IMR-90 (cell line): ENCODE measurements at regions of chr15 and their contacts with region 1.

Region 1: GRCh38 chr15:75104804-75105535 is 81.6 kb downstream of the PPCDC start:
- DNase-seq: peak; percentile 83
- ATAC-seq: peak; percentile 74
- H3K4me3 ChIP-seq: no peak overlapping the region
- H3K27ac ChIP-seq: no peak overlapping the region
- H3K4me1 ChIP-seq: peaks cover 9% of the 10 kb centered on the region
- H3K27me3 ChIP-seq: peaks cover 2% of the 10 kb centered on the region; the same call in 1 of the 2 replicates
- CTCF ChIP-seq: no peak
- POLR2A ChIP-seq: no peak
- RAD21 ChIP-seq: no peak

Region 2: DNA sequence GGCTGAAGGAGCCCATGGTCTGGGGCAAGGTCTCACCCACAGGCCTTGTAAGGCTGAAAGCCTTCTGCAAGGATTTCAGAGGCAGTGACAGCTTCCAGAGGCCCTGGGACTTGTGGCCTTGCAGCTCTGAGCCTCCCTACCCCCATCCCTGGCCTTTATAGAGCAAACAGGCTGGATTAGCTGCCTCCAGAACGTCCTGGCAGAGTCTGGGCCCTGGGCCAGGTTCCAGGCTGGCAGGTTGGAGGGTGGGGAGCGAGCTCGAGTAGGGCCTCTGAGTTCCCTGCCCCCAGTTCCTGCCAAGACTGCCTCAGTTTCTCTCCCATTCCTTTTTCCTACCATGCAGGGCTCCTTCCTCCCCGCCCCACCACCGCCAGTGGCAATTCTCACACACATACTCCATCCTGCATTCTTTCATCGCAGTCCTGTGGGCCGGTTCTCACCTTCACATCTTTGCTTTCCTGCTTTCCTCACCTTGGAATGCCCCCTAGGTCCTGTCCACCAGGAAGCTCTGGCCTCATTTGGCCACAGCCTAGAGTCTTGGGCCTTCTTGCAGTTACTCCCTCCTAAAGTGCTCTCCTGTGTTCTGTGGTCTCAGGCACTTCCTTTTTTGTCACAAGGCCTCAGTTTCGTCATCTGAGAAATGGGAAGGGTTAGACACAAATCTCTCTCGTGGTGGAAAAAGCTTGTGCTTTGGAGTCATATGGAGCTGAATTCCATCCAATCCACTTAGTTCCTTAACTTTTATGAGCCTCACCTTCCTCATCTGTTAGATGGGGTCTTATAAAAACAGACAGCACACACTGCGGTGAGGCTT is 289.6 kb before region 1 on chr15:
- CTCF ChIA-PET with region 1: no interaction called
- POLR2A ChIA-PET with region 1: no interaction called
- dilution Hi-C with region 1: no loop called
- in situ Hi-C with region 1: no loop called
- intact Hi-C with region 1: no loop called
- DNase-seq: no peak
- ATAC-seq: no peak
- H3K4me3 ChIP-seq: no peak overlapping the region
- H3K27ac ChIP-seq: no peak overlapping the region
- H3K4me1 ChIP-seq: no peaks in the 10 kb centered on the region
- H3K27me3 ChIP-seq: peaks cover 8% of the 10 kb centered on the region; the same call in 1 of the 2 replicates
- CTCF ChIP-seq: no peak
- POLR2A ChIP-seq: no peak
- RAD21 ChIP-seq: no peak

Region 3: GRCh38 chr15:75058127-75058905 is 46.7 kb before region 1 on chr15:
- CTCF ChIA-PET with region 1: no interaction called
- POLR2A ChIA-PET with region 1: no interaction called
- dilution Hi-C with region 1: no loop called
- in situ Hi-C with region 1: no loop called
- intact Hi-C with region 1: no loop called
- DNase-seq: peak; percentile 40
- ATAC-seq: no peak
- H3K4me3 ChIP-seq: no peak overlapping the region
- H3K27ac ChIP-seq: no peak overlapping the region
- H3K4me1 ChIP-seq: no peaks in the 10 kb centered on the region; the same call in 1 of the 2 replicates
- H3K27me3 ChIP-seq: no peaks in the 10 kb centered on the region
- CTCF ChIP-seq: no peak
- POLR2A ChIP-seq: no peak
- RAD21 ChIP-seq: no peak

Region 4: GRCh38 chr15:75123395-75123794 is 18.4 kb after region 1 on chr15:
- CTCF ChIA-PET with region 1: no interaction called
- POLR2A ChIA-PET with region 1: interaction called, 11 read pairs
- dilution Hi-C with region 1: no loop called
- in situ Hi-C with region 1: no loop called
- intact Hi-C with region 1: no loop called
- DNase-seq: peak; percentile 72
- ATAC-seq: peak; percentile 85
- H3K4me3 ChIP-seq: no peak overlapping the region
- H3K27ac ChIP-seq: no peak overlapping the region
- H3K4me1 ChIP-seq: peaks cover 4% of the 10 kb centered on the region
- H3K27me3 ChIP-seq: peaks cover 6% of the 10 kb centered on the region
- CTCF ChIP-seq: no peak
- POLR2A ChIP-seq: no peak
- RAD21 ChIP-seq: no peak

Region 5: DNA sequence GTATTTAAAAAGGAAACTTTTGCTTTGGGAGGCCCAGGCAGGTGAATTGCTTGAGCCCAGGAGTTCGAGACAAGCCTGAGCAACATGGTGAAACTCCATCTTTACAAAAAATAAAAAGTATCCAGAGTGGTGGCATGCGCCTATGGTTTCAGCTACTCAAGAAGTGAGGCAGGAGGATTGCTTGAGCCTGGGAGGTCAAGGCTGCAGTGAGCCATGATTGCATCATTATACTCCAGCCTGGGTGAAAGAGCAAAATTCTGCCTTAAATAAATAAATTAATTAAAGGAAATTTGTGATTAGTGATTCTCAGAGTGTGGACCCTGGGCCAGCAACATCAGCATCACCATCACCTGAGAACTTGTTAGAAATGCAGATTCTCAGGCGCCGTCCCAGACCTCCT is 221.0 kb after region 1 on chr15:
- CTCF ChIA-PET with region 1: no interaction called
- POLR2A ChIA-PET with region 1: no interaction called
- dilution Hi-C with region 1: no loop called
- in situ Hi-C with region 1: no loop called
- intact Hi-C with region 1: no loop called
- DNase-seq: no peak
- ATAC-seq: no peak
- H3K4me3 ChIP-seq: no peak overlapping the region
- H3K27ac ChIP-seq: no peak overlapping the region
- H3K4me1 ChIP-seq: no peaks in the 10 kb centered on the region
- H3K27me3 ChIP-seq: peaks cover 21% of the 10 kb centered on the region
- CTCF ChIP-seq: no peak
- POLR2A ChIP-seq: no peak
- RAD21 ChIP-seq: no peak